Activated B cell treated with CpG ODN at 0.5 μM for 24 hours (primary cell): ENCODE measurements at regions of chr18 and their contacts with region 1.

Region 1: GRCh38 chr18:24488824-24489493 is 28.5 kb downstream of the HRH4 start:
- DNase-seq: no peak
- ATAC-seq: peak; percentile 49
- H3K4me3 Mint-ChIP-seq: no peak overlapping the region
- H3K27ac Mint-ChIP-seq: no peak overlapping the region
- H3K4me1 Mint-ChIP-seq: peaks cover 29% of the 10 kb centered on the region
- H3K27me3 Mint-ChIP-seq: peaks cover 9% of the 10 kb centered on the region
- CTCF ChIP-seq: peak; percentile 51

Region 2: GRCh38 chr18:24176727-24177416 is 312.1 kb before region 1 on chr18:
- CTCF ChIA-PET with region 1: interaction called, 42 read pairs
- POLR2A ChIA-PET with region 1: interaction called, 4 read pairs
- intact Hi-C with region 1: loop called (anchors 1 kb)
- DNase-seq: peak; percentile 41
- ATAC-seq: peak; percentile 95
- H3K4me3 Mint-ChIP-seq: peak overlapping the region; percentile 79
- H3K27ac Mint-ChIP-seq: peak overlapping the region; percentile 95
- H3K4me1 Mint-ChIP-seq: peaks cover 18% of the 10 kb centered on the region
- H3K27me3 Mint-ChIP-seq: no peaks in the 10 kb centered on the region
- CTCF ChIP-seq: no peak

Region 3: DNA sequence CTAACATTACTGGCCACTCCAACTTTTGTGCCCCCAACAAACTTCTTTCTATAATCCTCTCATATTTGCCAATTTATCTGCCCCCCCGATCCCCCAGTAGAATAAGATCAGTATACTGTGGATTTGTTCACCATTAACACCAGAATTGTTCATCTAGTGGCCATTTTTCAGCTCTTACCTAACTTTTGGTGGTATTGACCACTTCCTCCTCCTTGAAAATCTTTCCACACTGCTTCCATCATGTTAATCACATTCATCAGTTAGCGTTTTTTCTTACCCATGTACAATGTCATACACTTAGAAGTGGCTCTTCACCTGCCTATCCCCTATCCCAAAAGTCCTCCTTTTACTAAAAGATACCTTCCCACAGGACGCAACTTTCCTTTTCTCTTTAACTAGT is 56.3 kb before region 1 on chr18:
- CTCF ChIA-PET with region 1: interaction called, 6 read pairs
- POLR2A ChIA-PET with region 1: no interaction called
- intact Hi-C with region 1: loop called (anchors 5 kb)
- DNase-seq: no peak
- ATAC-seq: no peak
- H3K4me3 Mint-ChIP-seq: no peak overlapping the region
- H3K27ac Mint-ChIP-seq: no peak overlapping the region
- H3K4me1 Mint-ChIP-seq: peaks cover 5% of the 10 kb centered on the region
- H3K27me3 Mint-ChIP-seq: no peaks in the 10 kb centered on the region
- CTCF ChIP-seq: no peak

Region 4: GRCh38 chr18:25832001-25832604 is 1343.1 kb after region 1 on chr18:
- CTCF ChIA-PET with region 1: interaction called, 4 read pairs
- POLR2A ChIA-PET with region 1: no interaction called
- intact Hi-C with region 1: loop called (anchors 5 kb)
- DNase-seq: no peak
- ATAC-seq: no peak
- H3K4me3 Mint-ChIP-seq: no peak overlapping the region
- H3K27ac Mint-ChIP-seq: no peak overlapping the region
- H3K4me1 Mint-ChIP-seq: no peaks in the 10 kb centered on the region
- H3K27me3 Mint-ChIP-seq: peaks cover 2% of the 10 kb centered on the region
- CTCF ChIP-seq: no peak